T-cell (primary cell): ENCODE measurements at regions of chr6 and their contacts with region 1.

Region 1: GRCh38 chr6:134822920-134823709 is 126.8 kb downstream of the ALDH8A1 start:
- DNase-seq: peak in 15 of 35 experiments; percentile 0 to 74 (median 6)
- ATAC-seq: peak; percentile 54 to 91 (median 78)
- H3K4me3 ChIP-seq: no peak overlapping the region
- H3K4me3 Mint-ChIP-seq: no peak overlapping the region
- H3K27ac ChIP-seq: no peak overlapping the region
- H3K27ac Mint-ChIP-seq: no peak overlapping the region
- H3K4me1 ChIP-seq: peaks cover 0 to 2% of the 10 kb centered on the region in 2 experiments
- H3K4me1 Mint-ChIP-seq: peaks cover 0 to 2% (median 0%) of the 10 kb centered on the region in 3 donors
- H3K27me3 ChIP-seq: no peaks in the 10 kb centered on the region
- H3K27me3 Mint-ChIP-seq: peaks cover 0 to 6% of the 10 kb centered on the region in 2 donors

Region 2: GRCh38 chr6:134123666-134124208 is 699.4 kb before region 1 on chr6:
- CTCF ChIA-PET with region 1: interaction called, 10 to 18 read pairs
- POLR2A ChIA-PET with region 1: no interaction called
- DNase-seq: peak in 25 of 35 experiments; percentile 2 to 72 (median 32)
- ATAC-seq: peak; percentile 59 to 98 (median 88)
- H3K4me3 ChIP-seq: no peak overlapping the region
- H3K4me3 Mint-ChIP-seq: no peak overlapping the region
- H3K27ac ChIP-seq: no peak overlapping the region
- H3K27ac Mint-ChIP-seq: peak overlapping the region in 1 of 2 donors; percentile 66
- H3K4me1 ChIP-seq: no peaks in the 10 kb centered on the region
- H3K4me1 Mint-ChIP-seq: peaks cover 0 to 3% (median 3%) of the 10 kb centered on the region in 3 donors
- H3K27me3 ChIP-seq: peaks cover 0 to 4% of the 10 kb centered on the region in 2 experiments
- H3K27me3 Mint-ChIP-seq: peaks cover 0 to 3% of the 10 kb centered on the region in 2 donors

Region 3: DNA sequence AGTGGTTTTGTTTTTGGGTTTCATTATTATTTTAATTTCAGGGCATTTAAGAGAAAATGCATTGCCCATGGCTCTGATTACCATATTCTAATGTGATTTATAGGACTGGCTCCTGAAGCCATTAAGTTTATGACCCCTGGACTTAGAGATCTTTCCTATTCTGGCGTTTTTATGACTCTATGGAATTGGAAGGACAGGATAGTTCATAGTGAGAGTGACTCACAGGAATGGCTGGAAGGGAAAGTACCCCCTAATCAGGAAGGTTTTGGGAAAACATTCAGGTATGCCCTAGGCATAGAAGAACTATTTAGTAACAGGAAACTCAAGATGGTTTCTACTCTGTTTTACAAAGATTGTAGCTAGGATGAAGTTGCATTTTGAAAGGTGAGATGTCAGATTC is 662.1 kb before region 1 on chr6:
- CTCF ChIA-PET with region 1: interaction called, 6 to 27 read pairs
- POLR2A ChIA-PET with region 1: no interaction called
- DNase-seq: no peak
- ATAC-seq: no peak
- H3K4me3 ChIP-seq: no peak overlapping the region
- H3K4me3 Mint-ChIP-seq: no peak overlapping the region
- H3K27ac ChIP-seq: no peak overlapping the region
- H3K27ac Mint-ChIP-seq: no peak overlapping the region
- H3K4me1 ChIP-seq: no peaks in the 10 kb centered on the region
- H3K4me1 Mint-ChIP-seq: no peaks in the 10 kb centered on the region
- H3K27me3 ChIP-seq: no peaks in the 10 kb centered on the region
- H3K27me3 Mint-ChIP-seq: no peaks in the 10 kb centered on the region

Region 4: GRCh38 chr6:134640975-134641429 is 182.1 kb before region 1 on chr6:
- CTCF ChIA-PET with region 1: interaction called, 10 to 12 read pairs
- POLR2A ChIA-PET with region 1: no interaction called
- DNase-seq: peak; percentile 46 to 89 (median 69)
- ATAC-seq: peak; percentile 86 to 90 (median 89)
- H3K4me3 ChIP-seq: no peak overlapping the region
- H3K4me3 Mint-ChIP-seq: no peak overlapping the region
- H3K27ac ChIP-seq: no peak overlapping the region
- H3K27ac Mint-ChIP-seq: no peak overlapping the region
- H3K4me1 ChIP-seq: peaks cover 0 to 8% of the 10 kb centered on the region in 2 experiments
- H3K4me1 Mint-ChIP-seq: peaks cover 18 to 20% (median 18%) of the 10 kb centered on the region in 3 donors
- H3K27me3 ChIP-seq: no peaks in the 10 kb centered on the region
- H3K27me3 Mint-ChIP-seq: no peaks in the 10 kb centered on the region